Activated CD8-positive, alpha-beta T cell treated with anti-CD3 and anti-CD28 coated beads for 36 hours (primary cell): ENCODE measurements at regions of chr10 and their contacts with region 1.

Region 1: DNA sequence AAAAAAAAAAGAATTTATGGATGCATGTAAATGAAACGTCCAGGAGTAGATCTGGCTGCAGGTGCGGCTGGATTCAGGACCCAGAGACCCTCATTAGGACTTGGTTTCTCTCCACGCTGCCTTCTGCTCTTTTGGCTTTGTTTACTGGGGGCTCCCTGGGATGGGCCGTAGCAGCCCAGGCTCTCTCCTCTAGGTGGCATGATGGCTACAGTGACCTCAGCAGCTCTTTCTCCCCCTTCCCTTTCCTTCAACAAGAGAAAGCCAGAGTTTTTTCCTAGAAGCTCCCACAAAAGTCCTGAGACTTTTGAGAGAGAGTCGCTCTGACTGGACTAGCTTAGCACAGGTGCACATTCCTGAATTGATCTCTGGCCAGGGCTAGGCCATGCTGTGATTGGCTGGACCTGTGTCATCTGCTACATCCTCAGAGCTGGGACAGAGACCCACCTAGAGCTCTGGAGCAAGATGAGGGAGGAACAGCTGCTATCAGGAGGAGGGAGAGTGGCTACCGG is 67.8 kb upstream of the PDCD4 start:
- DNase-seq: peak; percentile 67
- ATAC-seq: peak; percentile 75
- H3K4me3 Mint-ChIP-seq: peak overlapping the region; percentile 9
- H3K27ac Mint-ChIP-seq: peak overlapping the region; percentile 79
- H3K4me1 Mint-ChIP-seq: peaks cover 44% of the 10 kb centered on the region
- H3K27me3 Mint-ChIP-seq: no peaks in the 10 kb centered on the region
- CTCF ChIP-seq: peak; percentile 62

Region 2: GRCh38 chr10:110162741-110163145 is 641.1 kb before region 1 on chr10:
- CTCF ChIA-PET with region 1: no interaction called
- POLR2A ChIA-PET with region 1: no interaction called
- intact Hi-C with region 1: no loop called
- DNase-seq: no peak
- ATAC-seq: no peak
- H3K4me3 Mint-ChIP-seq: no peak overlapping the region
- H3K27ac Mint-ChIP-seq: no peak overlapping the region
- H3K4me1 Mint-ChIP-seq: peaks cover 13% of the 10 kb centered on the region
- H3K27me3 Mint-ChIP-seq: peaks cover 79% of the 10 kb centered on the region
- CTCF ChIP-seq: no peak

Region 3: GRCh38 chr10:110774069-110775019 is 29.5 kb before region 1 on chr10:
- CTCF ChIA-PET with region 1: interaction called, 10 read pairs
- POLR2A ChIA-PET with region 1: no interaction called
- intact Hi-C with region 1: no loop called
- DNase-seq: peak; percentile 78
- ATAC-seq: peak; percentile 91
- H3K4me3 Mint-ChIP-seq: peak overlapping the region; percentile 50
- H3K27ac Mint-ChIP-seq: peak overlapping the region; percentile 96
- H3K4me1 Mint-ChIP-seq: peaks cover 78% of the 10 kb centered on the region
- H3K27me3 Mint-ChIP-seq: no peaks in the 10 kb centered on the region
- CTCF ChIP-seq: no peak

Region 4: DNA sequence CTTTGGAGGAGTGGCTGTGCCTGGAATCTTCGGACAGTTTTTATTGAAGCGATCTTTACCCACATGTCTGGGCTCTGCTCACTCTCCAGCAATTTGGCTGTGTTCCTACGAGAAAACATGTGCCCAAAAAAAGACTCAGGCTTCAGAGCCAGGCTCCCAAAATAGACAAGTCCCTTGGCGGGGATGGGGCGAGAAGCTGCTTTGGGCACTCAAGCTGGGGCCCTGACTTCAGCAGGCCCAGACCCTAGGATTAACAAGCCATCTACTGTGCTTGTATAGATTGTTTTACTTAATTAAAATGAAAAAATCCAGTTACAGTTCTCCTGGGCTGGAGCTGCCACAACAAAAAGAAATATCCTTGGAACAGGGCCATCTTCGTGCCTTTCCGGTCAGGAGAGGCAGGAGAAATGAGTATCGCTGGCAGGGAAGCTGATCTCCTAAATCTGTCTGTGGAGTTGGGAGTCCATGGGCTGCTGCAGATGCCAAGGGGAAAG is 16.5 kb after region 1 on chr10:
- CTCF ChIA-PET with region 1: interaction called, 13 read pairs
- POLR2A ChIA-PET with region 1: interaction called, 6 read pairs
- intact Hi-C with region 1: no loop called
- DNase-seq: no peak
- ATAC-seq: no peak
- H3K4me3 Mint-ChIP-seq: no peak overlapping the region
- H3K27ac Mint-ChIP-seq: no peak overlapping the region
- H3K4me1 Mint-ChIP-seq: peaks cover 32% of the 10 kb centered on the region
- H3K27me3 Mint-ChIP-seq: no peaks in the 10 kb centered on the region
- CTCF ChIP-seq: no peak

Region 5: GRCh38 chr10:110857265-110858158 is 53.6 kb after region 1 on chr10:
- CTCF ChIA-PET with region 1: interaction called, 10 read pairs
- POLR2A ChIA-PET with region 1: interaction called, 5 read pairs
- intact Hi-C with region 1: loop called (anchors 5 kb)
- DNase-seq: peak; percentile 60
- ATAC-seq: peak; percentile 37
- H3K4me3 Mint-ChIP-seq: peak overlapping the region; percentile 8
- H3K27ac Mint-ChIP-seq: peak overlapping the region; percentile 85
- H3K4me1 Mint-ChIP-seq: peaks cover 75% of the 10 kb centered on the region
- H3K27me3 Mint-ChIP-seq: no peaks in the 10 kb centered on the region
- CTCF ChIP-seq: no peak

Region 6: GRCh38 chr10:110883924-110884323 is 80.0 kb after region 1 on chr10:
- CTCF ChIA-PET with region 1: interaction called, 18 read pairs
- POLR2A ChIA-PET with region 1: no interaction called
- intact Hi-C with region 1: no loop called
- DNase-seq: no peak
- ATAC-seq: peak; percentile 62
- H3K4me3 Mint-ChIP-seq: peak overlapping the region; percentile 54
- H3K27ac Mint-ChIP-seq: peak overlapping the region; percentile 81
- H3K4me1 Mint-ChIP-seq: peaks cover 67% of the 10 kb centered on the region
- H3K27me3 Mint-ChIP-seq: no peaks in the 10 kb centered on the region
- CTCF ChIP-seq: no peak

Region 7: GRCh38 chr10:110893559-110894179 is 89.8 kb after region 1 on chr10:
- CTCF ChIA-PET with region 1: interaction called, 24 read pairs
- POLR2A ChIA-PET with region 1: interaction called, 3 read pairs
- intact Hi-C with region 1: loop called (anchors 1 kb)
- DNase-seq: no peak
- ATAC-seq: peak; percentile 83
- H3K4me3 Mint-ChIP-seq: no peak overlapping the region
- H3K27ac Mint-ChIP-seq: peak overlapping the region; percentile 57
- H3K4me1 Mint-ChIP-seq: peaks cover 61% of the 10 kb centered on the region
- H3K27me3 Mint-ChIP-seq: no peaks in the 10 kb centered on the region
- CTCF ChIP-seq: peak; percentile 68

Region 8: DNA sequence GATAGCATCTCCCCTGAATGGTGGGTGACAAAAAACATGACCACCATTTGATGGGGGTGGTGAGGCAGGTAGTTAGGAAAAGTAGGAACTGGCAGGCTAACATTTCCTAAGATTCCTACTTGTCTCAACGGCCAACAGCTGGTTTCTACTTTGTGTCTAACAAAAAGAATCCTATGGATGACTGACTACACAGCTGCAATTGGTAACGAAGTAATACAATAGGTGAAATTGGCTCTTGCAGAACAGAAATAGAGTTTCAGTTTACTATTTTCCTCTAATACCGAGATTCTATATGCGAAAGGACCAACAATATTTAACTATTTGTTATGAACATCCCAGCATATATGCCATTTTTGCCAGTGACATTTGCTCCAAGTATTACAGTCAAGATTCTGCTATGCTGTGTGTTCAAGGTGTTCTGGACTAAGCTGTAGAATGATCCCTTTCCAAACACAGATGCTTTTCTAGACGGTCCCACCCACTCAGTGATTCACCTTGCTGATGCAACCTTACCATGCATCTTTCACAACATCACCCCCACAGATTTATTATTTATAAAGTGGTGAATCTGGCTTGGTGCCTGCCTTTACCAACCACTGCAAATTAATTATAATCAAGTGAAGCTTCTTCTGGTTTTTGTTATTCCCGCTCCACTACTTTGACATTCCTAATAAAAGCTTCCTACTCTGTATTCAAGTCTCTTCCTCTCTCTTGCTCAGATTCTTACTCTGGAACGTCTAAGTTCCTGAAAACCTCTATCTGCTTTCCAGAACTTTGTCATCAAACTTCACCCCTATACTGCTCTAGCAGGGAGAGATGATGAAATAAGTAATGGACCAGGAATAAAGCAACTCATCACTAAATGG is 98.3 kb after region 1 on chr10:
- CTCF ChIA-PET with region 1: interaction called, 18 read pairs
- POLR2A ChIA-PET with region 1: no interaction called
- intact Hi-C with region 1: no loop called
- DNase-seq: peak; percentile 79
- ATAC-seq: peak; percentile 63
- H3K4me3 Mint-ChIP-seq: peak overlapping the region; percentile 20
- H3K27ac Mint-ChIP-seq: peak overlapping the region; percentile 90
- H3K4me1 Mint-ChIP-seq: peaks cover 51% of the 10 kb centered on the region
- H3K27me3 Mint-ChIP-seq: no peaks in the 10 kb centered on the region
- CTCF ChIP-seq: no peak

Region 9: GRCh38 chr10:111739125-111739873 is 935.4 kb after region 1 on chr10:
- CTCF ChIA-PET with region 1: no interaction called
- POLR2A ChIA-PET with region 1: no interaction called
- intact Hi-C with region 1: no loop called
- DNase-seq: no peak
- ATAC-seq: no peak
- H3K4me3 Mint-ChIP-seq: no peak overlapping the region
- H3K27ac Mint-ChIP-seq: no peak overlapping the region
- H3K4me1 Mint-ChIP-seq: no peaks in the 10 kb centered on the region
- H3K27me3 Mint-ChIP-seq: no peaks in the 10 kb centered on the region
- CTCF ChIP-seq: no peak